Activated CD8-positive, alpha-beta T cell treated with anti-CD3 and anti-CD28 coated beads, Interleukin-2, amount 10 ng/mL, durations not matched to agents 7 days and 5 days (primary cell): ENCODE measurements at regions of chr11 and their contacts with region 1.

Region 1: DNA sequence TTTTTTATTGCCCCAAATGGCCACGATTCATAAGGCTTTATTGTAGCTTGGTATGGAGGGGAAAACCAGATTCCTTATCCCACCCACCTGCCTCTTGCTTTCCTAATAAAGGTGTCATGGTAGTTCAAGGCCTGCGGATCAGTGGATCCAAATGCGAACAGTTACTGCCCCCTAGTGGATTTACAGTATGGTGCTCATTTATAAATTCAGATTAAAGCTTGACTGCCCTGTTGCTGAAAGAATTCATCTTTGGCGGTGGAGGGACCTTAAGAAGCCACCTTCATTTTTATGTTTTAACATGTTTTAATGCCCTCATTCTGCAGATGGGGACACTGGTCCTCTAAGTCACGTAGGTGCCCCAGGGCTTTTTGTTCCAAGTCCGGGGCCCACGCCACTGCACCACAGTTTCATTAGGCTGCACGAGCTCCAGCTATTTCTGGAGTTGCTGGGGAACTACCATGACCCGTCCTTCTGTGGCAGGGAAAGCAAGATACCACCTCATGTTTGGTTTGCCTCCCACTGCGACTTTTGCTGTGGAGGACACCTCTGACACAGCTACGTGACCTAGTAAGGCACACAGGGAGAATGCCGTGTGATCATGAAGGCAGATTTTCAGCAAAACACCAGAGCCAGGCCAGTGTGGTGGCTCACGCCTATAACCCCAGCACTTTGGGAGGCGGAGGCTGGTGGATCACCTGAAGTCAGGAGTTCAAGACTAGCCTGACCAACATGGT is 15.6 kb upstream of the INCENP start:
- DNase-seq: peak; percentile 63
- ATAC-seq: peak; percentile 21
- H3K4me3 Mint-ChIP-seq: no peak overlapping the region
- H3K27ac Mint-ChIP-seq: no peak overlapping the region
- H3K4me1 Mint-ChIP-seq: peaks cover 22% of the 10 kb centered on the region
- H3K27me3 Mint-ChIP-seq: peaks cover 12% of the 10 kb centered on the region

Region 2: DNA sequence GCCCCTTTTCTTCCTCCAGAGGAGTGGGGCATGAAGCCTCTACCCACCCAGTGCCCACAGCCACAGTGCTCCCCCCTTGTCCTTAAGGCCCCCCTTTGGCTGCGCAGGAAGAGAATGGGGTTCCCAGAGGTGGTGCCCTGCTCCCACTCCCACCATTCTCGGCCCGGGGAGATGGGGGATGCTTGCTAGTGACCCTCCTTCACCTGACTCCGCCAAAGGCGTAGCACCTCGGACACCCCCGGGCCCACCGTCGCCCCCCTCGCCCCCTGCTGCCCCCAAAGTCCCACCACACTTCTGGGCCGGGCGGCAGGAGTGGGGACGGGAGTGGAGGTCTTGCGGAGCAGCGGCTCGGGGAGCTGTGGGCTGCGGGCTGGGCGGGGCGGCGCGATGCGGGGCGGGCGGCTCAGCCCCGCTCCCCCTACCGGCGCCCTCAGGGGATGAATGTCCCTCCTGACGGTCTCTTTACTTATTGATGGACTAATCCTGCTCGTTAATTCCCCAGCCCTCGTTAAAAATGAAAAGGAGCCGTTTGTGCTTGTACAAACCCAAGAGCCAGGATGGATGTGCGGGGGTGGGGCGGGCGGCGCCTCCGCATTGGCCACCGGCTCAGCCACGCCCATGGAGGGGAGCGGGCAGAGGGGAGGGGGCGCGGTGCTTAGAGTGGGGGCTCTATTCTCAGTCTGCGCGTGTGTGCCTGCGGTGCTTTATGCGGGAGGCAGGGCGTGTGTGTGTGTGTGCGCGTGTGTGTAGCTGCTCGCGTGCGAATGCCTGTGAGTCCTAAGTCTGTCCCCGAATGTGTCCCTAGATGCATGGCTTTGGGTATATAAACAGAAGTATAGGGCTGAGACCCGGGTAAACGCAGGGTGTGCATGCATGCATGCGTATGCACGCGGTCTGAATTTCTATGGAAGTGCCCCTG is 552.9 kb before region 1 on chr11:
- CTCF ChIA-PET with region 1: no interaction called
- POLR2A ChIA-PET with region 1: no interaction called
- DNase-seq: no peak
- ATAC-seq: no peak
- H3K4me3 Mint-ChIP-seq: no peak overlapping the region
- H3K27ac Mint-ChIP-seq: no peak overlapping the region
- H3K4me1 Mint-ChIP-seq: no peaks in the 10 kb centered on the region
- H3K27me3 Mint-ChIP-seq: peaks cover 31% of the 10 kb centered on the region

Region 3: DNA sequence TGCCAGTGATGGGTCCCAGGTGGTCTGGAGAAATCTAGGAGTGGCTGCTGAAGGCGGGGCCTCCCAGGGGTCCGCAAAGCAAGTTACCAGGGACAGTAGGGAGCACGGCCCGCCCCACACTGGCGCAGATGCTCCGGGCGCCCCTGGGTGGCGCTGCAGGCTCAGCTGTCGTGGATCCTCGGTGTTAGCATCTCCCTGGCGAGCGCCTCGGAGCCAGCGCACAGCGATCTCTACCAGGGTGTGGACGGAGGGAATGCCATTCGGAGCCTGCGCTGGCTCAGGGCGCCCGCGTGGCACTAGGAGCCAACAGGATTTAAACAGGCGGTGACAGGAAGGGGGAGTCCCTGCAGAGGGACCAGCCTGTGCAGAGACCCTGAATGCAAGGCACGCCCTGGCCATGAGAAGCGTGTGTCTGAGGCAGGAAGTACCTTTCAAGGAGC is 237.0 kb before region 1 on chr11:
- CTCF ChIA-PET with region 1: interaction called, 40 read pairs
- POLR2A ChIA-PET with region 1: no interaction called
- DNase-seq: peak; percentile 77
- ATAC-seq: peak; percentile 94
- H3K4me3 Mint-ChIP-seq: peak overlapping the region; percentile 54
- H3K27ac Mint-ChIP-seq: peak overlapping the region; percentile 61
- H3K4me1 Mint-ChIP-seq: peaks cover 8% of the 10 kb centered on the region
- H3K27me3 Mint-ChIP-seq: no peaks in the 10 kb centered on the region

Region 4: GRCh38 chr11:61891331-61892084 is 216.7 kb before region 1 on chr11 and contains the start of gene FADS3:
- CTCF ChIA-PET with region 1: interaction called, 193 read pairs
- POLR2A ChIA-PET with region 1: no interaction called
- DNase-seq: peak; percentile 58
- ATAC-seq: peak; percentile 85
- H3K4me3 Mint-ChIP-seq: peak within 1 kb of the TSS; percentile 79
- H3K27ac Mint-ChIP-seq: peak within 1 kb of the TSS; percentile 30
- H3K4me1 Mint-ChIP-seq: peaks cover 4% of the 10 kb centered on the region
- H3K27me3 Mint-ChIP-seq: peaks cover 4% of the 10 kb centered on the region
- total RNA-seq, gene FADS3: 3.8 to 4.5 TPM

Region 5: GRCh38 chr11:61947486-61948210 is 160.5 kb before region 1 on chr11:
- CTCF ChIA-PET with region 1: interaction called, 32 read pairs
- POLR2A ChIA-PET with region 1: no interaction called
- DNase-seq: peak; percentile 77
- ATAC-seq: peak; percentile 83
- H3K4me3 Mint-ChIP-seq: no peak overlapping the region
- H3K27ac Mint-ChIP-seq: no peak overlapping the region
- H3K4me1 Mint-ChIP-seq: no peaks in the 10 kb centered on the region
- H3K27me3 Mint-ChIP-seq: peaks cover 8% of the 10 kb centered on the region

Region 6: GRCh38 chr11:61967116-61967923 is 140.9 kb before region 1 on chr11 and contains the start of gene FTH1:
- CTCF ChIA-PET with region 1: interaction called, 12 read pairs
- POLR2A ChIA-PET with region 1: interaction called, 4 read pairs
- DNase-seq: peak; percentile 90
- ATAC-seq: peak; percentile 76
- H3K4me3 Mint-ChIP-seq: peak within 1 kb of the TSS; percentile 93
- H3K27ac Mint-ChIP-seq: peak within 1 kb of the TSS; percentile 97
- H3K4me1 Mint-ChIP-seq: peaks cover 65% of the 10 kb centered on the region
- H3K27me3 Mint-ChIP-seq: no peaks in the 10 kb centered on the region
- total RNA-seq, gene FTH1: 709 to 727 TPM

Region 7: DNA sequence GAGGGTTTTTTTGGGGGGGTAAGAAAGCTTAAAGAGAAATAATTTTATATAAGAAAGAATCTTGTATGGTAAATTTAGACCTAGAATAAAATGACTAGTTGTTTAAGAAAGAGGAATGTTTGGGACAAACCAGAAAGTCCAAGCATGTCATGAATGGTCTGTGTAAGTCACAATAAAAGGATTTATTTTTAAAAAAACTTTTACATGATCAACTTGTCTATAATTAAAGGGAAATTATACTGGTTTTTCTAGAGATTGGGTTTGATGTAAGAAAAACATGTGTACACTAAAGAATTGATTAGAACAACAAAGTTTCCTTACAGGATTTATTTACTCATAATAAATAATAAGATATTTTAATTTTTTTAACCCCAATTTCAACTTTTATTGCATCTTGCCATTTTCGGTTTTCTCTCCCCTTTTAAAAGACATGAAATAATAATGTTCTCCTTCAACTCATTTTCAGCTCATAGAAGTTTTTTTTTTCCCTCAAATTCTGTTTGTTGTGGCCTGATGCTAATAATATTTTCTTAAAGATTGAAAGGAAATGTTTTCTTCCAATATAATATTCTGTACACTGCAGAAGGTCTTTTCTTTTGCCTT is 19.8 kb before region 1 on chr11:
- CTCF ChIA-PET with region 1: interaction called, 20 read pairs
- POLR2A ChIA-PET with region 1: interaction called, 3 read pairs
- DNase-seq: no peak
- ATAC-seq: no peak
- H3K4me3 Mint-ChIP-seq: no peak overlapping the region
- H3K27ac Mint-ChIP-seq: no peak overlapping the region
- H3K4me1 Mint-ChIP-seq: no peaks in the 10 kb centered on the region
- H3K27me3 Mint-ChIP-seq: peaks cover 3% of the 10 kb centered on the region

Region 8: GRCh38 chr11:62123669-62124185 is 15.5 kb after region 1 on chr11 and contains the start of gene INCENP:
- CTCF ChIA-PET with region 1: interaction called, 17 read pairs
- POLR2A ChIA-PET with region 1: interaction called, 3 read pairs
- DNase-seq: peak; percentile 98
- ATAC-seq: peak; percentile 100
- H3K4me3 Mint-ChIP-seq: peak within 1 kb of the TSS; percentile 87
- H3K27ac Mint-ChIP-seq: peak within 1 kb of the TSS; percentile 93
- H3K4me1 Mint-ChIP-seq: peaks cover 32% of the 10 kb centered on the region
- H3K27me3 Mint-ChIP-seq: peaks cover 3% of the 10 kb centered on the region
- total RNA-seq, gene INCENP: 195 to 211 TPM

Region 9: DNA sequence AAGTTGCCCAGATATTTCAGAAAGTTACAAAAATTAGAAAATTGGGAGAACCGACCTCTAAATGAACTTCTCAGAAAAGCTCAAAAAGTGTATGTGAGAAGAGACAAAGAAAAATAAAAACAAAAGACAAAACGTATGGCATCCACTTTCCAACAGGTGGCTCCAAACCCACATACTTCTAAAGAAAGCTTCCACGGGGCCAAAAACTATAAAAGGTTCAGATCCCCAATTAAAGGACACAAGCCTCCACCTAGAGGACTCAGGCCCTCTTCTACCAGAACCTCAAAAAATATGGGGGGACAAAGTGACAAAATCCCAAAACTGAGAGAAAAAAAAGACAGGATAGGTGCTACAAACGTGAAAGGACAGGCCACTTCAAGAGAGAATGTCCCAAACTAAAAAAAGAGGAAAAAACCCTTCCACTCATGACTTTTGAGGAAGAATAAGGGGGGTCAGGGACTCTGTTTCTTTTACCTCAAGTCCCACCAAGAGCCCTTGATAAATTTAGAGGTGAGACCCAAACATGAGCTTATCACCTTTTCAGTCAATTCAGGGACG is 109.1 kb after region 1 on chr11:
- CTCF ChIA-PET with region 1: no interaction called
- POLR2A ChIA-PET with region 1: no interaction called
- DNase-seq: no peak
- ATAC-seq: no peak
- H3K4me3 Mint-ChIP-seq: no peak overlapping the region
- H3K27ac Mint-ChIP-seq: no peak overlapping the region
- H3K4me1 Mint-ChIP-seq: no peaks in the 10 kb centered on the region
- H3K27me3 Mint-ChIP-seq: peaks cover 25% of the 10 kb centered on the region